GM10248 (cell line): ENCODE measurements at regions of chr5 and their contacts with region 1.

Region 1: GRCh38 chr5:128201065-128201926 is 117.7 kb downstream of the SLC12A2 start:
- DNase-seq: peak; percentile 87
- CTCF ChIP-seq: peak; percentile 86

Region 2: DNA sequence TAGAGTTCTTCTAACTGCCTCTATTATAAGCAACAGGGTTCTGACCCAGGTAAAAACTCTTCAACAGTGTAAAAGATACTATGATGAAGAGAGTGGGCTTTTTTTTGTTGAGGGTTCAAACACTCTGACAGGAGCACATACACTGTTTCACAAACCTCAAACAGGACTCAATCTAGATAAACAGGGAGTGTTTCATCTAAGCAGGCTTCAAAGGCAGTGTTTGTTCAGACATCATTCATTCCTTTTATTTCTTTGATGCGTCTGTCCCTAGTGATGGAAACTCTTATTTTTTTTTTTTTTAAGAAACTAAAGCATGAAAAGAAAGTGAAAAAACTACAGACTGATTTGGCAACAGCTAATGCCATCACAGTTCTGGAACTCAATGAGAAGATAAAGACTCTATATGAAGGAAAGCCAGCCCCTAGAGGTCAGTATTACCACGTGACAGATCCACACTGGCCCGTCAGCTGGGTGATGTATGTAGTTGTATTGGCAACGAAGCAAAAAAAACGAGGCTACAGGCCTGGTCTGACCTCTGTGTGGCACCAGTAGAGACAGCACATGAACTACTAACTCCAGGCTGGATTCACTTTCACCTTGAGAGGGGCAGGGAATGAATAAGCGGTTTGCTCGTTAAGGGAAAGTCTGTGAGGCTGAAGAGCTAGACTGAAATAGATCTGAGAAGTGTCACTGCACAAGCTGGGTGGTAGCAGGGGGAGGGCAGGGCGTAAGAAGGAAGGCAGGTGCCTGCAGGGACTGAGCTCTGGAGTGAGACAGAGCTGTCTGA is 325.9 kb before region 1 on chr5:
- CTCF ChIA-PET with region 1: interaction called, 57 read pairs
- POLR2A ChIA-PET with region 1: no interaction called
- DNase-seq: peak; percentile 33
- CTCF ChIP-seq: peak; percentile 54

Region 3: DNA sequence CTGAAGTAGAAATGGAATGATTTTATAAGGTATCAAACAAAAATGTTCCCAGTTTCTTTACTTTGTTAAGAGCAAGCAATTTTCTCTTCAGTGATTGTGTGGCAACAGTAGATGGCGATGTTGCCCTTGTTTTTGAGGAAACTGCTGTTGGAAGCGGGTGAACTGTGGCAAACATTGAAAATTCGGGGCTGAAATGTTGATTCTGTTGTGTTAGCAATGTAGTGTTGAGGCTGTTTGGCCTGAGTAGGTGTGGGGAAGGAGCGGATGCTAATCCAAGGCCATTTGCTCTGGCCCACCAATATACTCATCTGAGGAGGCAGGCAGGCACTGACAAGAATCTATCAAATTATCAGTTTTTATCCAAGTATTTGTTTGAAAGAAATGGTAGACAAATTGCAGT is 12.0 kb after region 1 on chr5:
- CTCF ChIA-PET with region 1: interaction called, 13 read pairs
- POLR2A ChIA-PET with region 1: no interaction called
- DNase-seq: no peak
- CTCF ChIP-seq: peak; percentile 75